Mucosa of descending colon (tissue), 3 donors: ENCODE measurements at regions of chr13 and their contacts with region 1.

Region 1: DNA sequence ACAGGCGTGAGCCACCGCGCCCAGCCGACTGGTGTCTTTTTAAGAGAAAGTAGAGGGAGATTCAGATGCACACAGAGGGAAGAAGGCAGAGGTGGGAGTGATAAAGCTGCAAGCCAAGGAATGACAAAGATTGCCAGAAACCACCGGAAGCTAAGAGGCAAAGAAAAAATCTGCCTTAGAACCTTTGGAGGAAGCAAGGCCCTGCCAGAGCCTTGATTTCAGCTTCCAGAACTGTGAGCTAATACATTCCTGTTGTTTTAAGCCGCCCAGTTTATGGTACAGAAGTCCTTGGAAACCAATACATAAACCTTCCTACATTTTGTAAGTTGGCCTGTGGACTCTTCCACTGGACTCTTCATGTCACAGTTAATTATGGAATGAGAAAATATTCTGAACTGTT is 71.7 kb upstream of the SOX21 start:
- DNase-seq: no peak
- ATAC-seq: no peak
- H3K4me3 ChIP-seq: no peak overlapping the region
- H3K4me1 ChIP-seq: no peaks in the 10 kb centered on the region
- CTCF ChIP-seq: no peak

Region 2: DNA sequence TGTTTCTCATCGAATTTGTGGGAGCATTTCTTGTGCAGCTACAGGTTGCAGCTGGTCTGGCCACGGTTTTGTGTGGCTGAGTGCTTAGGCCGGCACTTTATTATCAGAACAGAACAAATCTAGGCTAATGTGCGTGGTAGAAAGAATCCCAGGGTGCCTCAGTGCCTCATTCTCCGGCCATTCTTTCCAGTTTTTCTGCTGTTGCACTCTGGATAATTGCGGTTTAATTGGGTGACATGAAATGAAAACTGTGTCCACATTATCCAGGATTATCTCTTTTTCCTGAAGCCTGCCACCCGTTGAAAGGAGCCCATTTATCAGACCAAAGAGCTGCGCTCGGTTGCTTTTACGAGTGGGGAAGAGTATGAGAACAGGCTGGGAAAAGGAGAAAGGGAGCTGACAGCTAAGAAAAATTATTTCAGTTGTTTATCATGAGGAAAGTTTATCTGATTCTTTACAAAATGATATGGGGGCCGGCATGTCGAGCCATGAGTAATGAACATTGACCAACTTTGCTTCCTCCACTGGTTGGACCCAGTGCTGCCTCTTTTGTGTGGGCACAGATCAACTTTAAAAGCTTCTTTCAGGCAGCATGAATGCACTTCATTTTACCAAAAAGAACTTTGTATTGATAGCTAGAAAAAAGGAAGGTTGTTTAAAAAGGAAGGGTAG is 45.3 kb after region 1 on chr13:
- intact Hi-C with region 1: loop called in 1 of 2 experiments (anchors 2 kb)
- DNase-seq: no peak
- ATAC-seq: no peak
- H3K4me3 ChIP-seq: no peak overlapping the region
- H3K4me1 ChIP-seq: no peaks in the 10 kb centered on the region
- CTCF ChIP-seq: no peak